ENCODE measurements at regions of chr5 and their contacts with region 1.

Region 1: GRCh38 chr5:95727764-95728191 is 3.4 kb upstream of the RHOBTB3 start:
- DNase-seq: peak in 1 of 2 donors; percentile 75
- H3K4me3 ChIP-seq: no peak overlapping the region
- H3K27ac ChIP-seq: peak overlapping the region in 4 of 5 donors; percentile 39 to 98 (median 94)
- H3K4me1 ChIP-seq: peaks cover 0 to 53% (median 32%) of the 10 kb centered on the region in 4 donors
- H3K27me3 ChIP-seq: no peaks in the 10 kb centered on the region
- CTCF ChIP-seq: no peak
- EP300 ChIP-seq: no peak
- POLR2A ChIP-seq: no peak

Region 2: GRCh38 chr5:95672486-95673469 is 55.0 kb before region 1 on chr5:
- intact Hi-C with region 1: loop called (anchors 10 kb)
- DNase-seq: no peak
- H3K4me3 ChIP-seq: no peak overlapping the region
- H3K27ac ChIP-seq: no peak overlapping the region
- H3K4me1 ChIP-seq: peaks cover 0 to 23% (median 6%) of the 10 kb centered on the region in 4 donors
- H3K27me3 ChIP-seq: no peaks in the 10 kb centered on the region
- CTCF ChIP-seq: no peak
- EP300 ChIP-seq: no peak
- POLR2A ChIP-seq: no peak

Measured in stomach (tissue), 19 donors.